ENCODE measurements at regions of chr14 and their contacts with region 1.

Region 1: GRCh38 chr14:76918751-76919543 is 92.7 kb downstream of the LRRC74A start:
- DNase-seq: peak; percentile 89
- H3K4me3 ChIP-seq: no peak overlapping the region
- H3K27ac ChIP-seq: peak overlapping the region; percentile 84 to 98 (median 88)
- H3K4me1 ChIP-seq: peaks cover 37 to 59% (median 46%) of the 10 kb centered on the region in 4 donors
- H3K27me3 ChIP-seq: no peaks in the 10 kb centered on the region
- CTCF ChIP-seq: peak in 2 of 5 experiments; percentile 4 to 32
- EP300 ChIP-seq: peak; percentile 39
- POLR2A ChIP-seq: peak; percentile 9

Region 2: DNA sequence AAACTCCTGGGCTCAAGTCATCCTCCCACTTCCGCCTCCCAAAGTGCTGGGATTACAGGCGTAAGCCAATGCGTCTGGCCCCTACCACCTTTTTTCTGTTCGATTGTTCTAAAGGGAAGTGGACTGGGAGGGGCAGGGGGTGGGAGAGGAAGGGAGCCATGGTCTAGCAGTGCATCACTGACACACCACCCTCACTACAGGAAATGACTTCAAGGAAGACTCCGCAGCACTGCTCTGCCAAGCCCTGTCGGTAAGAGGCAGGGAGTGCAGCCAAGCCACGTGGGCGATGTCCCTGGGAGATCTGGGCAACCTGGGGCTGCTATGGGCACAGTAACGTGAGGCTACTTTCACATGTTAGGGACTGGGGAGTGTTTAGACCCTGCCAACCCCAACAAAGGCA is 74.7 kb before region 1 on chr14:
- in situ Hi-C with region 1: no loop called
- intact Hi-C with region 1: no loop called
- DNase-seq: peak; percentile 31
- H3K4me3 ChIP-seq: no peak overlapping the region
- H3K27ac ChIP-seq: no peak overlapping the region
- H3K4me1 ChIP-seq: peaks cover 0 to 7% (median 6%) of the 10 kb centered on the region in 4 donors
- H3K27me3 ChIP-seq: no peaks in the 10 kb centered on the region
- CTCF ChIP-seq: no peak
- EP300 ChIP-seq: no peak
- POLR2A ChIP-seq: no peak

Region 3: GRCh38 chr14:76904740-76905438 is 14.1 kb before region 1 on chr14:
- in situ Hi-C with region 1: no loop called
- intact Hi-C with region 1: no loop called
- DNase-seq: peak; percentile 61
- H3K4me3 ChIP-seq: no peak overlapping the region
- H3K27ac ChIP-seq: peak overlapping the region; percentile 71 to 89 (median 84)
- H3K4me1 ChIP-seq: peaks cover 19 to 44% (median 22%) of the 10 kb centered on the region in 4 donors
- H3K27me3 ChIP-seq: no peaks in the 10 kb centered on the region
- CTCF ChIP-seq: no peak
- EP300 ChIP-seq: no peak
- POLR2A ChIP-seq: no peak

Region 4: GRCh38 chr14:77028384-77029231 is 109.7 kb after region 1 on chr14 and contains the start of gene IRF2BPL:
- in situ Hi-C with region 1: no loop called
- intact Hi-C with region 1: loop called (anchors 5 kb)
- DNase-seq: peak; percentile 99
- H3K4me3 ChIP-seq: peak within 1 kb of the TSS; percentile 73 to 77 (median 76)
- H3K27ac ChIP-seq: peak within 1 kb of the TSS; percentile 99 to 100 (median 100)
- H3K4me1 ChIP-seq: peaks cover 53 to 77% (median 61%) of the 10 kb centered on the region in 4 donors
- H3K27me3 ChIP-seq: no peaks in the 10 kb centered on the region
- CTCF ChIP-seq: no peak
- EP300 ChIP-seq: peak; percentile 80
- POLR2A ChIP-seq: peak; percentile 93
- total RNA-seq, gene IRF2BPL: 21.0 to 53.5 (median 32.5) TPM

Region 5: GRCh38 chr14:77040059-77040740 is 121.3 kb after region 1 on chr14:
- in situ Hi-C with region 1: loop called in 2 of 4 experiments (anchors 10 kb)
- intact Hi-C with region 1: loop called (anchors 5 kb)
- DNase-seq: peak; percentile 99
- H3K4me3 ChIP-seq: peak overlapping the region; percentile 14 to 40 (median 19)
- H3K27ac ChIP-seq: peak overlapping the region; percentile 99 to 100 (median 100)
- H3K4me1 ChIP-seq: peaks cover 65 to 90% (median 80%) of the 10 kb centered on the region in 4 donors
- H3K27me3 ChIP-seq: no peaks in the 10 kb centered on the region
- CTCF ChIP-seq: no peak
- EP300 ChIP-seq: peak; percentile 69
- POLR2A ChIP-seq: peak; percentile 28